Cardiac septum (tissue), 1 donor: ENCODE measurements at regions of chr3 and their contacts with region 1.

Region 1: GRCh38 chr3:62188681-62189383 is 184.5 kb downstream of the FEZF2 start:
- DNase-seq: no peak

Region 2: DNA sequence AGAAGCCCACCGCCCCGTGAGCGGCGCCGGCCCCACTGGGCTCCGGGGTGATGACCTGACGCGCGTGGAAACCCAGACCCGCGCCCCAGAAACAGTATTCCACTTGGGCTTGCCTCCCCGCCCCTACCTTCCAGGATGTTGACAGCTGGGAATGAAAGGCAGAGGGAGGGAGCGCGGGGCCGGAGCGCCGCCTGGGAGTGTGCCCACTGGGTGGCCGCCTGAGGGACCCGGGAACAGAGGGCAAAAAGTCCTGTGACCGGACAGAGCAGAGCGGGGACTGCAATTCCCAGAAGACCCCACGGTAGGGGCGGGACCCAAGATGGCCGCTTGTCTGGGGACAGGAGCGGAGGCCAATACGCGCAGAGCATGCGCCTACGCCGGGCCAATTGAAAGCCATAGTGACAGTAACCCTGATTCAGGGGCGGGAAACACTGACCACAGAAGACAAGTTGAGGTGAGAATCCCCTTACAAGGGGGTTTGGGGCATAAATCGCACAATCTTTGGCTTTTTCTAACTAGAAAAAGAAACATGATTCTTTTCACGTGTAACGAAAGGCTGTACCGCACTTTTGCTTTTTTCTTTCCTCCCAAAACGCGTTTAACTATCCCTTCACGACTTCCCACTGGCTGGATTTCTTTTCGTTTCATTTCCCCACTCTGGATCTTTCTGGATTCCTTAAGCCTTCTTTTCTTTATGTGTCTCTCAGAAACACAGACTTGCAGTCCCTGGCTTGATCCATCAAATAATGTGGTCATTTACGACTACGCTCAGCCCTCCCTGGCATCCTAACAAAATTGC is 937.5 kb before region 1 on chr3 and contains the start of gene FHIT:
- intact Hi-C with region 1: loop called (anchors 10 kb)
- DNase-seq: peak; percentile 97
- total RNA-seq, gene FHIT: 16.6 TPM

Region 3: DNA sequence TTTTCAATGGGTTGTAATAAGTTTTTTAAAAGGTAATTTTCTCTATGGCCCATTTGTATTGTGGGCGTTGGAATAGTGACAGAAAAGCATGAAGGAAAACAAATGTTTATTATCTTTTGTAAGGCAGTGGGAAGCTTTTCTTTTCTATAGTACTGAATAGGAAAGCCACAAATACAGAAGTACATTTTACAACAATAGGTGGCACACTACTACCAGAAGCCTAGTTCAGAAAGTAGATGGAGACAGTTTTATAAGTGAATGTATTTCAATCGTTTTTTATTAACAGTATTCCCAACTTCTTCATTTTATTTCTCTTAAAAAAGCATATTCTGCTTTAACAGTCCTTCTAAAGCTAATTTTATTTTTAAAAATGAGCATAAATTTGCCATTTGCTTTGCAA is 330.8 kb before region 1 on chr3:
- intact Hi-C with region 1: loop called (anchors 2 kb)
- DNase-seq: no peak

Region 4: DNA sequence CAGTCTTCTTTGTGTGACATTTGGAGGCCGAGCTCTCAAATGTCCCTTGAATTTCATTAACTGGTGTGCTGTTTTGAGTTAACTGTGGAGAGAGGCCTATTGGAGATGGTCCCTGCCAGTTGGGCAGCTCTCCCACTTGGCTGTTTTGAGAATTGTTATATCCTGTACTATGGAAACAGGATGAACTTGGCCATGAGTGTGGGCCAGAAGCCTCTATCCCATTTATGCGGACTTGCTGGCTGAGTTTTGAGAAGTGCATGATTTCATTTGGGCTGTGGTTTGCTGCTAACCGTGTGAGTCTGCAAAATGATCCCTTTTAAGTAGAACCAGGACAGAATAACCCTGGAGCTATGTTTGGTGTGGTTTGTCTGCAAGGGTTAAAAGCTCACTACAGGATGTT is 261.5 kb before region 1 on chr3:
- intact Hi-C with region 1: loop called (anchors 10 kb)
- DNase-seq: peak; percentile 87

Region 5: GRCh38 chr3:61956236-61956635 is 232.6 kb before region 1 on chr3:
- intact Hi-C with region 1: loop called (anchors 5 kb)
- DNase-seq: no peak